Activated CD4-positive, alpha-beta T cell treated with anti-CD3 and anti-CD28 coated beads for 36 hours (primary cell): ENCODE measurements at regions of chr5 and their contacts with region 1.

Region 1: DNA sequence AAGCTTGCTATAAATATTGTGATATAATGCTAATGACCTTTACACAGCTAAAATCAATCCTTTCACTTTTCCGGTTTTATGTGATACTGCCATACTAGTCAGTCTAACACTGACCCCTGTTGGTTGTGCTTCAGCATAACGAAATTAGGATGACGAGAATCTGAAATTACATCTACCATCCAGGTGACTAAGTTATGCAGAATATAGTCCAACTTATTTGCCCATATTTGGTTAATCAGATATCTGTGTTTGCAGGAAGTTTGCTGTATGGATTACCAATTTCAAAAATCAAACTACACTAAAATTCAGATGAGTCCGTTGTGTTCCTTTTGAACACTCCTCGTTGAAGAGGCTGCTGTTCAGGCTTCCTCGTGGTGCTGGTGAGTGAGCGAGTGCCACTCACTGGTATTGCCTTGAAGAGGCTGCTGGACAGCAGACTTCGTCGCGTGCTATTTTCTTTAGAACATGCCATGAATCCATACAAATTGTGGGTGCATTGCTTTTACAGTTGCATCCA is 32.5 kb downstream of the TENT4A start:
- DNase-seq: no peak
- ATAC-seq: peak; percentile 87
- H3K4me3 Mint-ChIP-seq: no peak overlapping the region
- H3K27ac Mint-ChIP-seq: no peak overlapping the region
- H3K4me1 Mint-ChIP-seq: peaks cover 5% of the 10 kb centered on the region
- H3K27me3 Mint-ChIP-seq: no peaks in the 10 kb centered on the region

Region 2: DNA sequence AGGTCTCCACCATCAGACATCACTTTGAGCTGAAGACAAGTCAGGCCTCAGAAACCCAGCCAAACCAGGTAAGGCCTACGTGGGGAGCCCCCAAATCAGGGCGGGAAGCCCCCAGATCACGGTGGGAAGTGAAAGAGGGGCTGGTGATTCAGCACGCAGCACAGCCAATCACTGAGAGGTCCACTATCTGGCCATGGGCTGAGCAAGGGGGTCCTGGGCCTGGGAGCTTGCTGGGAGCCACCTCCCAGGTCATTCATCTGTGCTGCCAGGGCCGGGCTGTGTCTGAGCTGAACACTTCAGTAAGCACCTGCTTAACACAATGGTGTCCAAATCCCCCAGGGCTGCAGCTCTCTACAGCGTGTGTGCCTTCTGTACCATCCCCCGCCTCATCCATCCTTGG is 382.9 kb before region 1 on chr5:
- CTCF ChIA-PET with region 1: no interaction called
- POLR2A ChIA-PET with region 1: no interaction called
- intact Hi-C with region 1: no loop called
- DNase-seq: no peak
- ATAC-seq: no peak
- H3K4me3 Mint-ChIP-seq: no peak overlapping the region
- H3K27ac Mint-ChIP-seq: no peak overlapping the region
- H3K4me1 Mint-ChIP-seq: peaks cover 16% of the 10 kb centered on the region
- H3K27me3 Mint-ChIP-seq: no peaks in the 10 kb centered on the region

Region 3: DNA sequence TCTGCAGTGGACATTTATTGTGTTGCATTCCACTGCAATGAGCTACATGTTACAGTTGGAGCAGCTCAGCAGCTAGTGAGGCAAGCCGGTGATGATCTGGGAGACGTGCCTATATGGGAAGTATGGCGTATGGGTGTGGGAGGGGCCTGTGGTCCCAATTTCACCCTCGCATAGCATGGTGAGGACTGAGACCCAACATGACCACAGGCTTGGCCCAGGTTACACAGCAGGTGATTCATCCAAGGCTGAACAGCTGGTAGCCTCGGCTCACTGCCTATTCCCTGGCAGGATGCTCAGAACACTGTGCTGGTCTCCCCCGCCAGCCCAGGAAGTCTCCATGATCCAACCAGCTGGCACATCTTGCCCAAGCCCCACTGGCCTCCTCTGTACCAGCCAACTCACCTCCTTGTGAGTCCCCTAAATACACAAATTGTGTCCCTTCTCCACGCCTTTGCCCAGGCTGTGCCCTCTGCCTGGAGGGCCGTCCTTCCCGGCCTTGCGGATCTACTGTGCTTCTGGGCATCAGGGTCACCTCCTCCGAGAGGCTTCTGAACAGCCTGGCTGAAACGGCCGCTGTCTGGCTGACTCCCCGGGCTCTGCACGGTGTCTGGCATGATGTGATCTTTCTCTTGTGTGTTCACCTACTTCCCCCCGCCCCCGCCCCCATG is 194.3 kb before region 1 on chr5:
- CTCF ChIA-PET with region 1: no interaction called
- POLR2A ChIA-PET with region 1: no interaction called
- intact Hi-C with region 1: no loop called
- DNase-seq: no peak
- ATAC-seq: no peak
- H3K4me3 Mint-ChIP-seq: no peak overlapping the region
- H3K27ac Mint-ChIP-seq: no peak overlapping the region
- H3K4me1 Mint-ChIP-seq: peaks cover 3% of the 10 kb centered on the region
- H3K27me3 Mint-ChIP-seq: peaks cover 7% of the 10 kb centered on the region

Region 4: DNA sequence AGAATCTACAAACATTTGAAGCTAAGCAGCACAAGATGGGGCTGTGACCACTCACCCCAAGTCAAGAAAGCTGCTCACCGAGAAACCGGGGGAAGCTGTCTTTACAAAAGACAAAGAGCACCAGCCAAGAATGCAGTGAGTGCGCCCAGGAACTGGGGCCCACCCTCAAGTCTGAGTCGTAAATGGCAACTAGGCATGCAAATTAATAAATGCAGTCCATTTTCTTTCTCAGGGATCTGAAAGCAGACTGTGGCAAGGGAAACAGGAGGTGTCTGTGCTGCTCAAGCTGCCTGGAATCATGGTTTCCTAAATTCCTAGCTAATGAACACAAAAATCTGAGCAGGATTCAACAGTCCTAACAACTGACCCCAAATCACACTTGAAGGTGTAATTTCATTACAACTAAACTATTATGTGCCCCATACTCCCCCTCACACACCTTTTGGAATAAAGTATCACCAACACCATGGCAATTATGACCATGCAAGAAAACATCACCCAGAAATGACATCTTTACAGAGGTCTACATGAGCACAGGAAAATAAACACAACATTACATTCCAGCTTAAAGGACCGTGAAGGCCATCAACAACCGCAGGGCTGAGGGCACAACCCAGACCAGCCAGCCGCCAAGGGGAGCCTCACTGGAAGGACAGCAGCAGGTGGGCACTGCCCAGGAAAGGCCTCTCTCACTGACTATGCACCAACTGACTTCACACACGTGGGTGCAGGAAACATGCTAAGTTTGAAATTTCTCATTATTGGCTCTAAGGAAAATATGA is 130.5 kb before region 1 on chr5:
- CTCF ChIA-PET with region 1: interaction called, 13 read pairs
- POLR2A ChIA-PET with region 1: no interaction called
- intact Hi-C with region 1: no loop called
- DNase-seq: no peak
- ATAC-seq: no peak
- H3K4me3 Mint-ChIP-seq: no peak overlapping the region
- H3K27ac Mint-ChIP-seq: no peak overlapping the region
- H3K4me1 Mint-ChIP-seq: peaks cover 22% of the 10 kb centered on the region
- H3K27me3 Mint-ChIP-seq: no peaks in the 10 kb centered on the region

Region 5: GRCh38 chr5:6728011-6728794 is 17.6 kb before region 1 on chr5:
- CTCF ChIA-PET with region 1: interaction called, 21 read pairs
- POLR2A ChIA-PET with region 1: no interaction called
- intact Hi-C with region 1: no loop called
- DNase-seq: peak; percentile 42
- ATAC-seq: peak; percentile 52
- H3K4me3 Mint-ChIP-seq: no peak overlapping the region
- H3K27ac Mint-ChIP-seq: peak overlapping the region; percentile 85
- H3K4me1 Mint-ChIP-seq: peaks cover 91% of the 10 kb centered on the region
- H3K27me3 Mint-ChIP-seq: no peaks in the 10 kb centered on the region